ENCODE measurements at regions of chr16 and their contacts with region 1.

Region 1: DNA sequence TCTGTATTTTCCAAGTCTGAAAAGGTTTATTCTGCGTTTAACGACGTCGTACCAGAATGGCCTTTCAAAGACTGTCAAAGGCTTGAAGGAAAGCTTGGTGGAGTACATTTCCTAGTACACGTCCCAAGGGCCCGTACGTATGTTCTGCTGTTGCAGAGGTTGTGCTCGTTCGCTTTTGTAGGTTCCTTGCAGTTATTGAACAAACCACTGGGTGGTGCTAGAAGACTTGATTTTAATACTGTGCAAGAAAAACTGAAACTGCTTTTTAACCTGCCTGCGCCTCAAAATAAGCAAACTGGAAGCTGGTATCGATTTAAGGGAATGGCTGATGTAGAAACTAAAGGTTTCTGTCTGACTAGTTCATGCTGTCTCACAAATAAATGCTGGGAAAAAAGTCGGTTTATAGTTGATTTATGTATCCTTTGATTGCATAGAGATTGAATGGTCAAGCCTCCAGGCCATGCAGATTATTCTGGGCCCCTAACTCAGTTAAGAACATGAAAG is 54.6 kb downstream of the USP10 start:
- DNase-seq: no peak
- ATAC-seq: peak; percentile 56 to 78
- H3K4me3 ChIP-seq: no peak overlapping the region
- H3K27ac ChIP-seq: no peak overlapping the region
- H3K4me1 ChIP-seq: peaks cover 4% of the 10 kb centered on the region
- H3K27me3 ChIP-seq: no peaks in the 10 kb centered on the region

Region 2: DNA sequence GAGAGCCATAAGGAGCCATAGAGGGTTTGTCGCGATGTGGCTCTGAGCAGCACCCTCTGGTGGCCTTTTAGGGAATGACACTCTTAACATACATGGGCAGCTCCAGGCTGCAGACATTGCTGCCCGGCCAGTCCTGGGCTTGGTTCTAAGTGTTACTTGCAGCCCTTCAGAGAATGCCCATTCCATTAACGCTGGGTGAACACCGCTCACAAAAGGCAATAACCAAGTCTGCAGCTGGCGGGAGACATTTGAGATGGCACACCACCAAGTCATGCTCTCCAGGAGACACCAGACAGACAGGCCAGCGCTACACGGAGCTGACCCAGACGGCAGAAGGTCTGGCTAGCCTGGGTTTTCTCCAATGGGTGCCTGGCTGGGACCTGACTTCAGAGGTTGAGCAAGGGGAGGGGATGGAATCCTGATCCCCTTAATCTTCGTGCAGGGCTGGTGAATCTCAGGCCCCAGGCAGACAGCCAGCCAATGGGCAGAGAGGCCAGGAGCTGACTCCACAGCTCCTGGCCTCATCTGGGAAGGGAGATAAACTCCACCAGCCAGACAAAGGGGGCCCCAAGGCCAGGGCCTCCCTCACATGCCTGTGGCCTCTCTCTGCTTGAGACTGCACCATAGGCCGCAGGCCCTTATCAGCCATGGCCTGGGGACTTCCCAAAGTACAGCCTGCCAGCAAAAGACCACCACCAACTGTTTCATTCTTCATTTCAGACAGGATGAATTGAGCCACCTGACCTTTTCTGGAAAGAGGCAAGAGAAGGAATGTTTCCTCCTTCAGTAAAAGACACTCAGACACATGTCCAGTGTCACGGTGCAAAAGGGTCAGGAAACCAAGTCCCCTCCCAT is 198.2 kb after region 1 on chr16:
- intact Hi-C with region 1: loop called in 3 of 4 experiments (anchors 5 kb)
- DNase-seq: peak; percentile 64 to 86 (median 84)
- ATAC-seq: peak; percentile 89 to 93
- H3K4me3 ChIP-seq: no peak overlapping the region
- H3K27ac ChIP-seq: peak overlapping the region; percentile 57
- H3K4me1 ChIP-seq: peaks cover 4% of the 10 kb centered on the region
- H3K27me3 ChIP-seq: no peaks in the 10 kb centered on the region

Region 3: DNA sequence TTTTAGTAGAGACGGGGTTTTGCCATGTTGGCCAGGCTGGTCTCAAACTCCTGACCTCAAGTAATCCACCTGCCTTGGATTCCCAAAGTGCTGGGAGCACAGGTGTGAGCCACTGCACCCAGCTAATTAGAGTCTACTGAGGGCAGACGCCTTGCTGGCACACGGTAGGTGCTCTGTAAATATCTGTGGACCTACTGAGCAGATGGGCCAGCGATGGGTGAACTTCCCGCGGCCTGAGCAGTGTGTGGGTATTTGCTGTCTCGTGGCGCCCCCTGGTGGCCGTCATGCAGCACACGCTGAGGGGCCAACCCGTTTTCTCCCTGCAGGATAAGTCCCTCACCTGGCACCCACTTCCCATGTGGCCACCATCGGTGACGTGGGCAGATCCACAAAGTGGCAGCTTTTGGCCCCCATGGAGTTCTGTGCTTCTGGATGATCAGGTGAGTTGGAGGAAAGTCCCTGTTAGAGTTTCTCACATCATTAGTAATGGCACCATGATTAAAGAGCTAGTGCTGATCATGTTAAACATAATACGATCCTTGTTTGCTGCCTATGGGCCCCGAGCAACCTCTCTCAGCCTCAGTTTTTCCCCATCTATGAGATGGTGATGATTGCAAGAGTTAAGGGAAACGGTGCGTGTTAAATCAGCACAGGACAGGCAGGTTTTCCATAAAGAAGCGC is 216.2 kb after region 1 on chr16:
- intact Hi-C with region 1: loop called in 3 of 4 experiments (anchors 2 to 5 kb)
- DNase-seq: peak; percentile 83 to 92 (median 91)
- ATAC-seq: peak; percentile 80 to 82
- H3K4me3 ChIP-seq: no peak overlapping the region
- H3K27ac ChIP-seq: no peak overlapping the region
- H3K4me1 ChIP-seq: peaks cover 3% of the 10 kb centered on the region
- H3K27me3 ChIP-seq: no peaks in the 10 kb centered on the region

Region 4: GRCh38 chr16:85086347-85087291 is 332.2 kb after region 1 on chr16:
- intact Hi-C with region 1: loop called in 1 of 4 experiments (anchors 10 kb)
- DNase-seq: peak; percentile 80 to 93 (median 89)
- ATAC-seq: peak; percentile 60 to 61
- H3K4me3 ChIP-seq: no peak overlapping the region
- H3K27ac ChIP-seq: no peak overlapping the region
- H3K4me1 ChIP-seq: peaks cover 6% of the 10 kb centered on the region
- H3K27me3 ChIP-seq: no peaks in the 10 kb centered on the region

Region 5: GRCh38 chr16:85448557-85449197 is 694.3 kb after region 1 on chr16:
- intact Hi-C with region 1: no loop called
- DNase-seq: no peak
- ATAC-seq: no peak
- H3K4me3 ChIP-seq: no peak overlapping the region
- H3K27ac ChIP-seq: no peak overlapping the region
- H3K4me1 ChIP-seq: no peaks in the 10 kb centered on the region
- H3K27me3 ChIP-seq: no peaks in the 10 kb centered on the region

Region 6: DNA sequence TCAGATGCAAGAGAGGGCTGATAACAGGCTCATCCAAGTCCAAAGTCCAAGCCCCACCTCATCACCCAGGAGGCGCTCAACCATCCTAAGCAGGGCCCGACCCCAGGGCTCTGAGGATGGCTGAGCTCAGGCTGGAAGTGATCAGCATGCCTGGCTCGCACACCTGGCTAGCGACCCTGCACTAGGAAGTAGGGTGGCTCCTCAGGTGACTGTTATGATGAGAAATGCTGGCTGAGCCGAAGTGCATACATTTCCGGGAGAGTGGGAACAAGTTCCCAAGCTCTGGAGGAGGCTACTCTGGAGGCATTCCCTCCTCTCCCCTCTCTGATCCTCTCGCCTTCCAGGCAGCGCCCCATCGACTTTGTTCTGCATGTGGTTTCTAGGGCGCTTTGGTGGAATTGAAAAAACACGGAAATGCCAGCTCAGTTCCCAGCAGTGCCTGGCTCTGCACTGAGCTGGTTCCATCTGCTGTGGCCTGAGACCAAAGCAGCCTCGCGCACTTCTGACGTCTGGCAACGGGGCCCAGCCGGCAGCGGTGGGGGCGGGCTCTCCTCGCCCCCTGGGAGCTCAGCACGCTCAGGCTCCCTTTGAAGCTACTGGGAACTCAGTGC is 1274.8 kb after region 1 on chr16:
- intact Hi-C with region 1: no loop called
- DNase-seq: peak; percentile 42 to 70 (median 58)
- ATAC-seq: peak; percentile 27 to 62
- H3K4me3 ChIP-seq: no peak overlapping the region
- H3K27ac ChIP-seq: no peak overlapping the region
- H3K4me1 ChIP-seq: no peaks in the 10 kb centered on the region
- H3K27me3 ChIP-seq: no peaks in the 10 kb centered on the region